ENCODE measurements at regions of chr6 and their contacts with region 1.

Region 1: DNA sequence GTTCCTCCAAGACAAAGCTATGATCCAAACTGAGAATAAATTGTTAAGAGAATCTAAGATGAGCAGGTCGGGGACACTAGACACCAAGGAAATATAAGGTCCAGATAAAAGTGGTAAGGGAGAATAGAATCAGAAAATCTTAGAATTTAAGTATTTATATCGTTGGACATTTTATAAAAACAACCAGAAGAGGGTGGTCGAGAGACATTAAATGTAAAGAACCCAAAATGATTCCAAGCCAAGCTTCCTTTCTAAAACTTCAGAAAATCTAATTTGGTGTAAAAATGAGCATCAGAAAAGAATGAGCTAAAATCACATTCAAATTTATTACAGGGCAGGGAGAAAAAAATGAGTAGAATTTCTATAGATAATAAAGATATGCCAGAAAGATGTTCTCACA is 97.8 kb upstream of the OGFRL1 start:
- DNase-seq: peak in 1 of 2 donors; percentile 32
- H3K4me3 ChIP-seq: no peak overlapping the region
- H3K27ac ChIP-seq: no peak overlapping the region
- H3K4me1 ChIP-seq: no peaks in the 10 kb centered on the region
- H3K27me3 ChIP-seq: no peaks in the 10 kb centered on the region
- CTCF ChIP-seq: no peak
- EP300 ChIP-seq: no peak
- POLR2A ChIP-seq: no peak

Region 2: GRCh38 chr6:71114986-71115385 is 75.8 kb before region 1 on chr6:
- intact Hi-C with region 1: no loop called
- DNase-seq: no peak
- H3K4me3 ChIP-seq: no peak overlapping the region
- H3K27ac ChIP-seq: no peak overlapping the region
- H3K4me1 ChIP-seq: no peaks in the 10 kb centered on the region
- H3K27me3 ChIP-seq: no peaks in the 10 kb centered on the region
- CTCF ChIP-seq: no peak
- EP300 ChIP-seq: no peak
- POLR2A ChIP-seq: no peak

Region 3: DNA sequence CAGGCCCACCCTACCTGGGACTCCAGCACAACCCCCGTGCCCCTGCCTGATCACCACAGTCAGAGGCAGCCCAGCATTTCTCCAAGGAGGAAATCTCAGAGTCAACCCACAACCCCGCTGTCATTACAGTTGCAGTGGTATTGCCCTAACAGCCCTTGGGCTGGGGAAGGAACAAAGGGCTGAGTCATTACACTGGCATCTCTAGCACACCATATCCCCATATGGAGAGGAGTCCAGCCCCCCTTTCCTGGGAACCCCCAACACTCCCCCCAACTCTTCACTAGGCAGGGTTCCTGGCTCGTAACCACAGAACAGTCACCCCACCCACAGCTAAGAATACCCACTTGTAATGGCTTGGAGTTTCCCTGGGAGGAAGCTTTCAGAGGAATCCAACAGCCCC is 51.6 kb before region 1 on chr6:
- intact Hi-C with region 1: no loop called
- DNase-seq: no peak
- H3K4me3 ChIP-seq: no peak overlapping the region
- H3K27ac ChIP-seq: no peak overlapping the region
- H3K4me1 ChIP-seq: no peaks in the 10 kb centered on the region
- H3K27me3 ChIP-seq: no peaks in the 10 kb centered on the region
- CTCF ChIP-seq: no peak
- EP300 ChIP-seq: no peak
- POLR2A ChIP-seq: no peak

Region 4: DNA sequence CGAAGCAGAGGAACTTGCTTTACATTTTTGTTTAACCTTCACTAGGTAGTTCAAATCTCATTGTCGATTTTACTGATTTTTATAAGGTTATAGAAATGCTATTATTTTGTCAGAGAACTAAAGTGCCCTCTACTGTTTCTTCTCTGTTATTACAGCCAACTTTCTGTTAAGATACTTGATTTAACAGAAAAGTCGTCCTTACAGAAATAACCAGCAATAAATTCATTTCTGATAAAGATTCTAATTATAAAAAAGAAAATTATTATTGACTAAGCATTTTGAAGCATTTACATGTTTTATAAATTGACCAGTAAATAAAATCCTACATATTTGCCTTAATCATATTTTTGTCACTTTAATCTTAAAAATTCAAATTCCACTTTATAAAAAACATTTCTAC is 158.6 kb after region 1 on chr6:
- intact Hi-C with region 1: loop called (anchors 10 kb)
- DNase-seq: peak in 1 of 2 donors; percentile 44
- H3K4me3 ChIP-seq: no peak overlapping the region
- H3K27ac ChIP-seq: peak overlapping the region in 2 of 5 donors; percentile 57 to 62
- H3K4me1 ChIP-seq: peaks cover 0 to 25% (median 10%) of the 10 kb centered on the region in 4 donors
- H3K27me3 ChIP-seq: no peaks in the 10 kb centered on the region
- CTCF ChIP-seq: peak in 4 of 7 experiments; percentile 43 to 65 (median 56)
- EP300 ChIP-seq: no peak
- POLR2A ChIP-seq: no peak

Region 5: GRCh38 chr6:71656121-71656520 is 465.3 kb after region 1 on chr6:
- intact Hi-C with region 1: no loop called
- DNase-seq: no peak
- H3K4me3 ChIP-seq: no peak overlapping the region
- H3K27ac ChIP-seq: no peak overlapping the region
- H3K4me1 ChIP-seq: no peaks in the 10 kb centered on the region
- H3K27me3 ChIP-seq: no peaks in the 10 kb centered on the region
- CTCF ChIP-seq: no peak
- EP300 ChIP-seq: no peak
- POLR2A ChIP-seq: no peak